ENCODE measurements at regions of chr18 and their contacts with region 1.

Region 1: GRCh38 chr18:2536493-2536892 is 34.8 kb downstream of the METTL4 start:
- DNase-seq: no peak
- H3K4me3 ChIP-seq: no peak overlapping the region
- H3K4me3 Mint-ChIP-seq: no peak overlapping the region
- H3K27ac ChIP-seq: no peak overlapping the region
- H3K27ac Mint-ChIP-seq: peak overlapping the region in 1 of 7 donors; percentile 36
- H3K4me1 ChIP-seq: no peaks in the 10 kb centered on the region
- H3K4me1 Mint-ChIP-seq: no peaks in the 10 kb centered on the region
- H3K27me3 ChIP-seq: no peaks in the 10 kb centered on the region
- H3K27me3 Mint-ChIP-seq: no peaks in the 10 kb centered on the region

Region 2: GRCh38 chr18:2104620-2105462 is 431.7 kb before region 1 on chr18:
- CTCF ChIA-PET with region 1: interaction called, 29 read pairs
- POLR2A ChIA-PET with region 1: interaction called, 6 read pairs
- intact Hi-C with region 1: no loop called
- DNase-seq: peak in 4 of 5 donors; percentile 10 to 20 (median 17)
- H3K4me3 ChIP-seq: no peak overlapping the region
- H3K4me3 Mint-ChIP-seq: no peak overlapping the region
- H3K27ac ChIP-seq: no peak overlapping the region
- H3K27ac Mint-ChIP-seq: no peak overlapping the region
- H3K4me1 ChIP-seq: no peaks in the 10 kb centered on the region
- H3K4me1 Mint-ChIP-seq: peaks cover 0 to 7% (median 1%) of the 10 kb centered on the region in 4 donors
- H3K27me3 ChIP-seq: no peaks in the 10 kb centered on the region
- H3K27me3 Mint-ChIP-seq: peaks cover 8 to 10% of the 10 kb centered on the region in 2 donors

Region 3: DNA sequence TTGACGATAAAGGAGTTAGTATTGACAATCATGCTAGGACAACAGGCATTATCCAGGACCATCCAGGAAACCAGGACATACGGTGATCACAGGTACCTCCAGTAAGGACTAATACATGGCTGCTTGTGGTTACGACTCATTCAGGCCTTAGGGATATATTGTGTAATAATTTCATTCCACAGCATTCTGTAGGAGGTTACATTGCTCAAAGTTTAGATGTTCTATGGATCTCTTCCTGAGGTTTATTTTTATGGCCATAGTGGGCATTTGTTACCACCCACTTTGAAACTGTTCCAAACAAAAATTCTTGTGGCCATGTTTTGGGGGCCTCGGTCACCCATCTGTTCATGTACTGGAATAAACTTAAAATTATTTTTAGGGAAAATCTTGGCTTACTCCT is 396.8 kb before region 1 on chr18:
- CTCF ChIA-PET with region 1: no interaction called
- POLR2A ChIA-PET with region 1: no interaction called
- intact Hi-C with region 1: no loop called
- DNase-seq: no peak
- H3K4me3 ChIP-seq: no peak overlapping the region
- H3K4me3 Mint-ChIP-seq: no peak overlapping the region
- H3K27ac ChIP-seq: no peak overlapping the region
- H3K27ac Mint-ChIP-seq: no peak overlapping the region
- H3K4me1 ChIP-seq: no peaks in the 10 kb centered on the region
- H3K4me1 Mint-ChIP-seq: no peaks in the 10 kb centered on the region
- H3K27me3 ChIP-seq: no peaks in the 10 kb centered on the region
- H3K27me3 Mint-ChIP-seq: peaks cover 5 to 7% of the 10 kb centered on the region in 2 donors

Region 4: DNA sequence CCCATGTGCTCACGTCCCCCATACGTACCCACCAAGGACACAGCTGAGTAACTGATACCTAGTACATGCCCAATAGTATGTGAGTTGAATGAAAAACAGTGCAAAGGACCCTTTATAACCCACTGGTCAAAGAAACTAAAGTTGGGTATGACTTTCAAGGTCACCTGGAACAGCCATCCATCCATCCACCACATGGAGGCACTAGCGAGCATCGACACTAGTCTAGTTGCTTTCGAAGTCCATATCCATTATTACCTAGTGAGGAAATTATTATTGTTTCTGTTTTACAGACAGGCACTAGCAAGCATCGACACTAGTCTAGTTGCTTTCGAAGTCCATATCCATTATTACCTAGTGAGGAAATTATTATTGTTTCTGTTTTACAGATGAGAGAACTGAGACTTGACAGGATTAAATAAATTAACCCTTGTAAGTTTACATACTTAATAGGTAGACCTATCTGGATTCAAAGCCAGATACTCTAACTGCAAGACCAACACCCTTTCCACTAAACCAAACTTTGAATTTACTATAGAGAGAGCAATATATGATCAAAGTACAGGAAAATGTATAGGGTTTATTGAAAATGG is 198.8 kb before region 1 on chr18:
- CTCF ChIA-PET with region 1: interaction called, 33 read pairs
- POLR2A ChIA-PET with region 1: no interaction called
- intact Hi-C with region 1: no loop called
- DNase-seq: peak; percentile 18 to 46 (median 36)
- H3K4me3 ChIP-seq: no peak overlapping the region
- H3K4me3 Mint-ChIP-seq: no peak overlapping the region
- H3K27ac ChIP-seq: no peak overlapping the region
- H3K27ac Mint-ChIP-seq: no peak overlapping the region
- H3K4me1 ChIP-seq: no peaks in the 10 kb centered on the region
- H3K4me1 Mint-ChIP-seq: no peaks in the 10 kb centered on the region
- H3K27me3 ChIP-seq: no peaks in the 10 kb centered on the region
- H3K27me3 Mint-ChIP-seq: peaks cover 11 to 26% of the 10 kb centered on the region in 2 donors

Region 5: DNA sequence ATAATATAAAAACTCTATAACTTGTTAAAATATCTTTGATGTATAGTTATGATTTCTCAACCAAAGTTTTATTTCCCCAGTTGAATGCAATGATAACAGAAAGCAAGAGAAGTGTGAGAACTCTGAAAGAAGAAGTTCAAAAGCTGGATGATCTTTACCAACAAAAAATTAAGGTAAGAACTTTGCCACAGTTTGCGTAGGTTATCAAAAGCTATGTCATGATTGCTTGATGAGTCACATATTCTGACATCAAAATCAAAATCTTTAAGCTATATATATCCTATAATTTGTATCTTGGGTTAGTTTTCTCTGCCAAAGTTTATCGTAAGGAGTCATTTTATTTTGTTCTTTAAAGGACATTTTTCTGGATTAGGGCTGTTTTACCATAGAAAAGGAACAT is 69.8 kb after region 1 on chr18:
- CTCF ChIA-PET with region 1: no interaction called
- POLR2A ChIA-PET with region 1: no interaction called
- intact Hi-C with region 1: no loop called
- DNase-seq: peak in 4 of 5 donors; percentile 41 to 54 (median 46)
- H3K4me3 ChIP-seq: peak overlapping the region in 1 of 2 donors; percentile 8
- H3K4me3 Mint-ChIP-seq: peak overlapping the region; percentile 52 to 89 (median 66)
- H3K27ac ChIP-seq: peak overlapping the region; percentile 55
- H3K27ac Mint-ChIP-seq: peak overlapping the region; percentile 76 to 97 (median 93)
- H3K4me1 ChIP-seq: peaks cover 59% of the 10 kb centered on the region
- H3K4me1 Mint-ChIP-seq: peaks cover 35 to 52% (median 44%) of the 10 kb centered on the region in 4 donors
- H3K27me3 ChIP-seq: no peaks in the 10 kb centered on the region
- H3K27me3 Mint-ChIP-seq: no peaks in the 10 kb centered on the region